Heart left ventricle (tissue), 16 donors: ENCODE measurements at regions of chr17 and their contacts with region 1.

Region 1: DNA sequence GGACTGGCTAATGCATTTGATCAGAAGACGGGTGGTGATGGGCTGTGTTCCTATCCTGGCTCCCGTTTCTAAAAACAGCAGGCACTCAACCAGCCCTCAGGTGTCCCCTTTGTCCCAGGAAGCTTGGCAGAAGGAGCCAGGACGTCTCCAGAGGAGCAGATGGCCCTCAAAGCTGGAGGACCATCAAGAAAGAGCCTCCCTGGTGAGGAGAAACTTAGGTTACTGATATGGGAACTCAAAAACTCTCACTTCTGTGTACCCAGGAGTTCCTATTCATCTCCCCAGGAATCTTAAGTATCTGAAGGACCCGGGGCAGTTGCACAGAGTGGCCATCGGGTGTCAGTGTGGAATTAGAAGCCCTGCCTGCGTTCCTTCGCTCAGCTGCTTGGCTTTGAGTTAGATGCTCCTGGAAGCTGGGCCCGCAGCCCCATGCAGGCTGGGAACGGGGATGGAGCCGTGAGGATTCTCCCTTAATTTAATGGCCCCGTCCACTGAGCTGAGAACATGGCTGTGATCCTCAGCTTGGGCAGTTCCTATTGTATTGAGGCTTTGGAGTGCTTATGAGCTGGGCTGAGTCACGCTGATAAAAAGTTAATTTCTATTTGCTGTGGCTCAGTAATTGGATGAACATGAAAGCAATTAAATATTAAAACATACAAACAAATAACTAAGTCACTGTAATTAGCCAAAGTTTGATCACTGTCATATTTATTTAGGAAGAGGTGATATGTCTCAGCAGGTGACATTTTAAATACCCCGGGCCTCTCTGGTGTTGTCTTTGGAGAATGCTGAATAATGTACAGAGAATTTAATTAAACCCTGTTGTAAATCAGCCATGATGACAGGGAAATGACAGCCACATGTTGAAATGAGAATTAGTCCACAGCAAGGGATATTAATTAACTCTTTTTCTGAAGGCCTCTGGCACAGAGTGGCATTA is 402.1 kb downstream of the SEC14L1 start:
- DNase-seq: peak; percentile 74 to 87 (median 81)
- ATAC-seq: peak; percentile 84 to 95 (median 92)
- H3K4me3 ChIP-seq: peak overlapping the region in 1 of 12 donors; percentile 4
- H3K27ac ChIP-seq: peak overlapping the region in 11 of 12 donors; percentile 27 to 89 (median 61)
- H3K4me1 ChIP-seq: peaks cover 0 to 29% (median 12%) of the 10 kb centered on the region in 12 donors
- H3K27me3 ChIP-seq: no peaks in the 10 kb centered on the region
- CTCF ChIP-seq: peak; percentile 83 to 98 (median 92)
- POLR2A ChIP-seq: no peak

Region 2: DNA sequence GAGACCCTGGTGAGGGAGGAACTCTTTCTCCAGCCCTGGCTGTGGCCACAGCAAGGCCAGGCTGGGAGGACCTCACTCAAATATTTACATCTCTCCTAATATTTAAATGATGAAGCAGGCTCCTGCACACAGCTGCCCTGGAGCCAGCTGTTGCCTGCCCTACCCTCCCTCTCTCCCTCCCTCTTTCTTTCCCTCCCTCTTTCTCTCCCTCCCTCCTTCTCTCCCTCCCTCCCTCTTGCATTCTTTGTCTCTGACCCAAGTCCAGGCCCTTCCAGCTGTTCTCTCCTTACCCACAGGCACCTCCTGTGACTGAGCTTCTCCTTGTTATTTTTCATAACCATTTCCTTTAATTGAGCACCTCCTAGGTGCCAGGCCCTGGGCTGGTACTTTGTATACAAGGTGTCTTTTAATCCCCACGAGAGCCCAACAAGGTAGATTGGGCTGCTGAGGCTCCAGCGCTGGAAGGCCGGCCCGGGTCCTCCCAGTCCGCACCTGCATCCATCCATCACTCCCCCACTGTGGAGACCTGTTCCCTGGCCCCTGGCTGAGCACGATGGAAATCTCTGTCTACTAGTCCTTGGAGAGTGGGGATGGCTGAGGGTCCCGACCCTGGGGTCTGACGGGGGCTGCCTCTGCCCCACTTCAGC is 159.7 kb before region 1 on chr17:
- intact Hi-C with region 1: no loop called
- DNase-seq: peak in 1 of 5 donors; percentile 39
- ATAC-seq: peak in 3 of 4 donors; percentile 4 to 28 (median 7)
- H3K4me3 ChIP-seq: no peak overlapping the region
- H3K27ac ChIP-seq: peak overlapping the region in 11 of 12 donors; percentile 54 to 96 (median 86)
- H3K4me1 ChIP-seq: peaks cover 45 to 100% (median 94%) of the 10 kb centered on the region in 12 donors
- H3K27me3 ChIP-seq: no peaks in the 10 kb centered on the region
- CTCF ChIP-seq: no peak
- POLR2A ChIP-seq: no peak

Region 3: GRCh38 chr17:77634710-77635109 is 91.9 kb after region 1 on chr17:
- intact Hi-C with region 1: no loop called
- DNase-seq: no peak
- ATAC-seq: peak in 1 of 4 donors; percentile 47
- H3K4me3 ChIP-seq: no peak overlapping the region
- H3K27ac ChIP-seq: no peak overlapping the region
- H3K4me1 ChIP-seq: no peaks in the 10 kb centered on the region
- H3K27me3 ChIP-seq: peaks cover 0 to 3% (median 0%) of the 10 kb centered on the region in 9 donors
- CTCF ChIP-seq: no peak
- POLR2A ChIP-seq: no peak

Region 4: DNA sequence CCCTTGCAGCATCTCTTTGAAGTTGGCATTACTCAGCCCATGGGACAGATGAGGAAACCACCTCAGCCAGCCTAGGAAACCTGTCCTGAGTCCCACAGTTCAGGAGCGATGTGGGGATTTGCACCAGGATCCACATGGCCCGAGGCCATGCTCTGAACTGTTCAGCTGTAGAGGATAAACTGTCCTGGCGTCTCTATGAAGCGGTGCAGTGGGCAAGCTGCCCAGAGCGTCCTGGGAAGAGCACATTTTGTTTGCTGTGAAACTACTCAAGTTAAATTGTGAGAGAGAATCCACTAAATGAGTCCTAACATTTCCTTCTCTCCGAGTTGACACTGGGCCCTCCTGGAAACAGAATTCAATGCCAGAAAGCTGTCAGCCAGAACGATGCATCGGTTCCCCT is 139.0 kb after region 1 on chr17:
- intact Hi-C with region 1: loop called in 1 of 10 experiments (anchors 5 kb)
- DNase-seq: peak; percentile 46 to 90 (median 78)
- ATAC-seq: peak; percentile 73 to 81 (median 77)
- H3K4me3 ChIP-seq: no peak overlapping the region
- H3K27ac ChIP-seq: peak overlapping the region in 7 of 12 donors; percentile 0 to 55 (median 29)
- H3K4me1 ChIP-seq: peaks cover 0 to 36% (median 5%) of the 10 kb centered on the region in 12 donors
- H3K27me3 ChIP-seq: no peaks in the 10 kb centered on the region
- CTCF ChIP-seq: no peak
- POLR2A ChIP-seq: no peak

Region 5: DNA sequence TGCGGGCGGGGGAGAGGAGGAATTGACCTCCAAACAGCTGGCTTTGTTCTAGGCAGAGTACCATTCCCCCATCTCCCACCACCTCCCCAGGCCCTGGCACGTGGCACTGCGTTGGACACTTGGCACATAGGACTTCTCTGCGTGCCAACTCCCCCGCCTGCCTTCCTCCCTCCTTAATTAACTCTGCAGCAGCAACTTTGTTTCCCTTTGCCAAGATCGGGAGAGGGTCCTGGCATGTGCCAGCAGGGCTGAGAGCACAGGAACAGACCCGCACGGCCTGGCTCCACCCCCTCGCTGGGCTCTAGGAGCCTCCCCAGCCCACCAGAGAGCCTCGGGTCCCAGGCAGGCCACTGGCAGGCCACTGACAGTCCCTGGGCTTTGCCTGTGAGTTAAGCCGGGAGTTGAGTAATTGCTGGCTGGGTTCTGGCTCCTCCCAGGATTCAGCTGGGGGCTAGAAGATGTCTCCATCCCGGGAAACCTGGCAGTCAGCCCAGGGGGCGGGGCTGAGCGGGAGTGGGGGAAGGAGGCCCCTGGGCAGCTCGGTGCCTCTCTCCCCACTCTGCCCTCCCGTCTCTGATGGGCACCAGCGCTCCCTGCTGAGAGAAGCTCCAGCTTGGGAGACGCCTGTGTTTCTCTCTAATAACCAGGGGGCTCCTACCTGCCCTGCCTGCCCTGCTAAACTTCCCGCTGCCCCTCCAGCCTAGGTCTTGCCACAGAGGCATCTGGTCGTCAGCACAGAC is 191.7 kb after region 1 on chr17:
- intact Hi-C with region 1: loop called (anchors 1 to 10 kb)
- DNase-seq: peak; percentile 92 to 96 (median 93)
- ATAC-seq: peak; percentile 74 to 84 (median 82)
- H3K4me3 ChIP-seq: peak overlapping the region in 6 of 12 donors; percentile 7 to 28 (median 16)
- H3K27ac ChIP-seq: peak overlapping the region; percentile 78 to 97 (median 86)
- H3K4me1 ChIP-seq: peaks cover 0 to 55% (median 42%) of the 10 kb centered on the region in 12 donors
- H3K27me3 ChIP-seq: no peaks in the 10 kb centered on the region
- CTCF ChIP-seq: peak in 5 of 12 donors; percentile 6 to 46 (median 23)
- POLR2A ChIP-seq: no peak

Region 6: GRCh38 chr17:77821097-77821496 is 278.3 kb after region 1 on chr17:
- intact Hi-C with region 1: loop called in 2 of 10 experiments (anchors 5 kb)
- DNase-seq: peak in 3 of 5 donors; percentile 40 to 73 (median 66)
- ATAC-seq: peak in 3 of 4 donors; percentile 70 to 80 (median 77)
- H3K4me3 ChIP-seq: no peak overlapping the region
- H3K27ac ChIP-seq: peak overlapping the region in 2 of 12 donors; percentile 1 to 34
- H3K4me1 ChIP-seq: peaks cover 0 to 33% (median 11%) of the 10 kb centered on the region in 12 donors
- H3K27me3 ChIP-seq: no peaks in the 10 kb centered on the region
- CTCF ChIP-seq: peak in 8 of 12 donors; percentile 8 to 42 (median 21)
- POLR2A ChIP-seq: no peak

Region 7: GRCh38 chr17:78013683-78014467 is 471.1 kb after region 1 on chr17:
- intact Hi-C with region 1: loop called (anchors 1 to 5 kb)
- DNase-seq: peak in 3 of 5 donors; percentile 35 to 54 (median 35)
- ATAC-seq: peak; percentile 18 to 66 (median 56)
- H3K4me3 ChIP-seq: no peak overlapping the region
- H3K27ac ChIP-seq: peak overlapping the region in 1 of 12 donors; percentile 6
- H3K4me1 ChIP-seq: peaks cover 0 to 19% (median 6%) of the 10 kb centered on the region in 12 donors
- H3K27me3 ChIP-seq: no peaks in the 10 kb centered on the region
- CTCF ChIP-seq: peak; percentile 32 to 91 (median 77)
- POLR2A ChIP-seq: no peak

Region 8: DNA sequence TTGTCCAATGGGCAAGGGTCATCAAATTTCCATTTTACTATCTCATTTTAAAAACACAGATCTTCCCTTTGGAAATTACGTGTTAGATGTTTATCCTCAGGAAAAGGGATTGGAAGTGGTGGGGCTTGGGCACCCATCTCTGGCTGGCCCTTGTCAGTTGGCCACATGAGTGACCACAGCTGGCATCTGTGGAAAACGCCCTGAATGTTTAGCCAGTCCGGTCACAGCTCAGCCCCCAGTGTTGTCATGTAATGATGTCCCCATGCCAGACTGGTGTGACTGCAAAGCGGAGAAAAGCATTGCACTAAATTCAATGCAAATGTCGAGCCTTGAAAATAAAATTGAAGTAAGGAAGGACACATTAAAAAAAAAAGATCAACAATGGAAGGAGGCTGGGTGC is 532.7 kb after region 1 on chr17:
- intact Hi-C with region 1: loop called in 1 of 10 experiments (anchors 10 kb)
- DNase-seq: no peak
- ATAC-seq: no peak
- H3K4me3 ChIP-seq: no peak overlapping the region
- H3K27ac ChIP-seq: no peak overlapping the region
- H3K4me1 ChIP-seq: peaks cover 0 to 13% (median 0%) of the 10 kb centered on the region in 12 donors
- H3K27me3 ChIP-seq: no peaks in the 10 kb centered on the region
- CTCF ChIP-seq: no peak
- POLR2A ChIP-seq: no peak